Endothelial cell of umbilical vein (primary cell): ENCODE measurements at regions of chrX and their contacts with region 1.

Region 1: DNA sequence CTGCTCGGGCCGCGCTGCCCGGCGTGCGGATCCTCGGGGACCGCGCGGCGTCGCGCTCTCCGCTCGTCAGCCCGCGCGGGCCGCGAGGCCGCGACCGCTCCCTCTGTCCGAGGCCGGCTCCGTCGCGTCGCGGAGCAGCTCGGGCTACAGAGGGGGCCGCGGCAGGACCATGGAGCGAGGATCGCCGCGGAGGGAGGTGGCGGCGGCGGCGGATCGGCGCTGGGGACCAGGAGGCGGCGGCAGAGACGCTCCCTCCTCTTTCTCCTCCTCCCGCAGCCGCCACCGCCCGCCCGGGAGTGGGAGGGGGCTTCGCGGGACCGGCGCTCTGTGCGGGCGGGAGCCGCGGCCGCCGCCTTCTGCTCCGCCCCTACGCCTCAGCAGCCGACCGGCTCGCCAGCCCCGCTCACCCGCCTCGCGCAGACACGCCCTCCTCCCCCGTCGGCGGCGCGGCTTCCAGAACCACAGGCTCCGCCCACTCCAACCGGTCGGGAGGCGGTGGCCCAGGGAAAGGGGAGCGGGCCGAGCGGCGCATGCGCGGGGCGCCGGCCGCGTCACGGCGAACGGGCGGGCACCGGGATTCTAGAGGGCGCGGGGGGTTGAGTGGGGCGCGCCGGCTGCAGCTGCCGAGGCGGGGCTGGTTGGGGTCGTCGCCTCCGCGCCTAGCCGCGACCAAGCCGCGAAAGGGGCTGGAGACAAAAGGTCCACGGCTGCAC is at the start of gene CASK:
- DNase-seq: peak; percentile 91
- H3K4me3 ChIP-seq: peak within 1 kb of the TSS; percentile 74 to 75 (median 75)
- H3K27ac ChIP-seq: peak within 1 kb of the TSS; percentile 45
- H3K4me1 ChIP-seq: no peaks in the 10 kb centered on the region
- H3K27me3 ChIP-seq: peaks cover 5 to 7% of the 10 kb centered on the region in 2 experiments
- CTCF ChIP-seq: no peak
- POLR2A ChIP-seq: no peak
- total RNA-seq, gene CASK: 30.4 and 32.7 TPM in 2 replicates

Region 2: DNA sequence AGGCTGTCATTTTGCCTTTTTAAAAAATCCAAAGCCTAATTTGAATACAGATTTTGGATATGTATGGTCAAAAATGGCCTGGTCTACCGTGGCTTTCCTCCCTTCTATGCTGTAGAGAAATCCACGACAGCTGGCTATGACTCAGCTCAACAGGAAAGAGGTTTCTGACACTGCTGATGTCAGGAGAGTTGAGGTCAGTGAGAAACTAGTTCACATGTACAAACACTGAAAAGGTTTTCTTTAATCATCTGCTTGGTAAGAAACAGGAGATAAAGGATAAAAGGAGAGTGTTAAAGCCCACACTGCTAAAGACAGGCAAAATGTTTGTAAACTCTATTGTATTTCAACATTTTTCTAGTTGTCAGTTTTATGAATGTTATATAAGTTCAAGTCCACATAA is 362.4 kb before region 1 on chrX:
- CTCF ChIA-PET with region 1: no interaction called
- POLR2A ChIA-PET with region 1: no interaction called
- dilution Hi-C with region 1: no loop called
- intact Hi-C with region 1: loop called (anchors 2 kb)
- DNase-seq: peak; percentile 79
- H3K4me3 ChIP-seq: no peak overlapping the region
- H3K27ac ChIP-seq: peak overlapping the region; percentile 62
- H3K4me1 ChIP-seq: peaks cover 15% of the 10 kb centered on the region
- H3K27me3 ChIP-seq: no peaks in the 10 kb centered on the region
- CTCF ChIP-seq: no peak
- POLR2A ChIP-seq: no peak

Region 3: GRCh38 chrX:41781502-41781901 is 141.9 kb before region 1 on chrX:
- CTCF ChIA-PET with region 1: interaction called, 3 read pairs
- POLR2A ChIA-PET with region 1: no interaction called
- dilution Hi-C with region 1: no loop called
- intact Hi-C with region 1: loop called (anchors 5 kb)
- DNase-seq: peak; percentile 49
- H3K4me3 ChIP-seq: no peak overlapping the region
- H3K27ac ChIP-seq: no peak overlapping the region
- H3K4me1 ChIP-seq: peaks cover 12% of the 10 kb centered on the region
- H3K27me3 ChIP-seq: no peaks in the 10 kb centered on the region
- CTCF ChIP-seq: peak; percentile 48 to 49
- POLR2A ChIP-seq: no peak

Region 4: GRCh38 chrX:41796577-41796976 is 126.8 kb before region 1 on chrX:
- CTCF ChIA-PET with region 1: interaction called, 3 read pairs
- POLR2A ChIA-PET with region 1: no interaction called
- dilution Hi-C with region 1: no loop called
- intact Hi-C with region 1: loop called (anchors 5 kb)
- DNase-seq: no peak
- H3K4me3 ChIP-seq: no peak overlapping the region
- H3K27ac ChIP-seq: no peak overlapping the region
- H3K4me1 ChIP-seq: no peaks in the 10 kb centered on the region
- H3K27me3 ChIP-seq: no peaks in the 10 kb centered on the region
- CTCF ChIP-seq: no peak
- POLR2A ChIP-seq: no peak

Region 5: DNA sequence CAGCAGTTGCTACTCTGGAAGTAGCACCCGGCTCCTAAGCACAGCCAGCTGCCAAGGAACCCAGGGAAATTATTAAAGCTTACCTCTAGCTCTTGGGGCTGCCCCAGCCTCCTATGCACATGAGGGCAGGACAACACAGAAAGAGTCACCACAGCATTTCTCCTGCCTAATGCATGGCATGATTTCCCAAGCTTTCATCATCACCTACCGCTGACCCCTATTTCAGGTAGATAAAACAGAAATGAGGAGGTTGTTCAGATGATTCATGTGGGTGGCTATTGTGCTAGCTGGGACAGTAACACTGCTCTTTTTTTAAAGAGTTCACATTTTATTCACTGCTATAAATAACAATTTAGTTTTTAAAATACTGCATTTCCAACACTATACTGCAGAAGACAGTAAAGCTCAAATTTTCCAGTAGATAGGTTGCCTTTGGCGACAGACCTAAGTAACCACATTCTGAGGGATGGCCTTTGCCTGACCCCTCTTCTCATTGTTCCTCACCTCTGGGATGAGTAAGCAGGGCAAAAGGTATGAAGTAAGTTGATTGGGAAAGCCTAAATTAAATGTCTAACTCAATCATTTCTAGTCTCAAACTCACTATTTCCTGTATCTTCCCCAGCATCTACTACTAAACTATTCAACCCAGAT is 16.8 kb before region 1 on chrX:
- CTCF ChIA-PET with region 1: no interaction called
- POLR2A ChIA-PET with region 1: no interaction called
- dilution Hi-C with region 1: no loop called
- intact Hi-C with region 1: no loop called
- DNase-seq: peak; percentile 28
- H3K4me3 ChIP-seq: no peak overlapping the region
- H3K27ac ChIP-seq: no peak overlapping the region
- H3K4me1 ChIP-seq: no peaks in the 10 kb centered on the region
- H3K27me3 ChIP-seq: no peaks in the 10 kb centered on the region
- CTCF ChIP-seq: no peak
- POLR2A ChIP-seq: no peak

Region 6: GRCh38 chrX:42027367-42028000 is 104.1 kb after region 1 on chrX:
- CTCF ChIA-PET with region 1: no interaction called
- POLR2A ChIA-PET with region 1: no interaction called
- dilution Hi-C with region 1: no loop called
- intact Hi-C with region 1: loop called (anchors 2 kb)
- DNase-seq: no peak
- H3K4me3 ChIP-seq: no peak overlapping the region
- H3K27ac ChIP-seq: no peak overlapping the region
- H3K4me1 ChIP-seq: peaks cover 5% of the 10 kb centered on the region
- H3K27me3 ChIP-seq: no peaks in the 10 kb centered on the region
- CTCF ChIP-seq: no peak
- POLR2A ChIP-seq: no peak

Region 7: DNA sequence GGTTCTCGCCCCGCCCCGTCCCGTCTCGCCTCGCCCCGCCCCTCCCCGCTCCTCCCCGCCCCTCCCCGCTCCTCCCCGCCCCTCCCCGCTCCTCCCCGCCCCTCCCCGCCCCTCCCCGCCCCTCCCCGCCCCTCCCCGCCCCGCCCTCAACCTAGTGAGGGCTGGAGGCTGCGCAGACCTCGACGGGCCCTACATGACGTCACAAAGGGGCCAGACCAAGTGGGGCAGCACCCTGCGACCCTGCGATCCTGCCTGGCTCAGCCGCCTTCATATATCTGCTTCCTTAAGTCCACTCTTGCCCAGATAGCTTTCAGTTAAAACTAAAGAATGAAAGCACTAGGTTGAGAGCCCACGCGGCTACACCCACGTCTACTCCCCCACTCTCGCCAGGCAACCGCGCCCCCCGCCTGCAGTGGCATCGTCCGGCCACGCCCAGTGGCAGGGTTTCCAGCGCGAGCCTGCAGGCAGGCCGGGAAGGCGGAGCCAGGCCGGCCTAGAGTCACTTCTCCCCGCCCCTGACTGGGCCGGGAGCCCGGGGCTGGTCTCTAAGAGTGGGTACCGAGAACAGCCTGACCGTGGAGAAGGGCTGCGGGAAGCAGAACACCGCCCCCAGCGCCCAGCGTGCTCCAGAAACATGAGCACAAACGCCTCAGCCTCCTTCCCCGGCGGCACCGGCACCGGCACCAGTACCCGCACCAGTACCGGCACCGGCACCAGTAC is 1731.2 kb after region 1 on chrX:
- CTCF ChIA-PET with region 1: no interaction called
- POLR2A ChIA-PET with region 1: no interaction called
- dilution Hi-C with region 1: no loop called
- intact Hi-C with region 1: loop called (anchors 2 kb)
- DNase-seq: peak; percentile 92
- H3K4me3 ChIP-seq: peak overlapping the region; percentile 42 to 76 (median 74)
- H3K27ac ChIP-seq: peak overlapping the region; percentile 95
- H3K4me1 ChIP-seq: no peaks in the 10 kb centered on the region
- H3K27me3 ChIP-seq: no peaks in the 10 kb centered on the region
- CTCF ChIP-seq: peak; percentile 9 to 41
- POLR2A ChIP-seq: peak; percentile 52